Ascending aorta (tissue), 2 donors: ENCODE measurements at regions of chr2 and their contacts with region 1.

Region 1: GRCh38 chr2:127857265-127857808 is 618 bp downstream of the POLR2D start:
- DNase-seq: no peak
- H3K4me3 ChIP-seq: peak overlapping the region; percentile 78 to 96
- H3K27ac ChIP-seq: peak overlapping the region; percentile 67 to 81
- H3K4me1 ChIP-seq: peaks cover 0 to 9% of the 10 kb centered on the region in 2 donors
- H3K27me3 ChIP-seq: no peaks in the 10 kb centered on the region
- CTCF ChIP-seq: no peak

Region 2: GRCh38 chr2:127355386-127356008 is 501.8 kb before region 1 on chr2:
- intact Hi-C with region 1: no loop called
- DNase-seq: no peak
- H3K4me3 ChIP-seq: no peak overlapping the region
- H3K27ac ChIP-seq: no peak overlapping the region
- H3K4me1 ChIP-seq: peaks cover 0 to 11% of the 10 kb centered on the region in 2 donors
- H3K27me3 ChIP-seq: no peaks in the 10 kb centered on the region
- CTCF ChIP-seq: peak; percentile 9 to 41 (median 19)

Region 3: GRCh38 chr2:127743477-127744026 is 113.8 kb before region 1 on chr2:
- intact Hi-C with region 1: no loop called
- DNase-seq: no peak
- H3K4me3 ChIP-seq: no peak overlapping the region
- H3K27ac ChIP-seq: no peak overlapping the region
- H3K4me1 ChIP-seq: no peaks in the 10 kb centered on the region
- H3K27me3 ChIP-seq: no peaks in the 10 kb centered on the region
- CTCF ChIP-seq: no peak

Region 4: DNA sequence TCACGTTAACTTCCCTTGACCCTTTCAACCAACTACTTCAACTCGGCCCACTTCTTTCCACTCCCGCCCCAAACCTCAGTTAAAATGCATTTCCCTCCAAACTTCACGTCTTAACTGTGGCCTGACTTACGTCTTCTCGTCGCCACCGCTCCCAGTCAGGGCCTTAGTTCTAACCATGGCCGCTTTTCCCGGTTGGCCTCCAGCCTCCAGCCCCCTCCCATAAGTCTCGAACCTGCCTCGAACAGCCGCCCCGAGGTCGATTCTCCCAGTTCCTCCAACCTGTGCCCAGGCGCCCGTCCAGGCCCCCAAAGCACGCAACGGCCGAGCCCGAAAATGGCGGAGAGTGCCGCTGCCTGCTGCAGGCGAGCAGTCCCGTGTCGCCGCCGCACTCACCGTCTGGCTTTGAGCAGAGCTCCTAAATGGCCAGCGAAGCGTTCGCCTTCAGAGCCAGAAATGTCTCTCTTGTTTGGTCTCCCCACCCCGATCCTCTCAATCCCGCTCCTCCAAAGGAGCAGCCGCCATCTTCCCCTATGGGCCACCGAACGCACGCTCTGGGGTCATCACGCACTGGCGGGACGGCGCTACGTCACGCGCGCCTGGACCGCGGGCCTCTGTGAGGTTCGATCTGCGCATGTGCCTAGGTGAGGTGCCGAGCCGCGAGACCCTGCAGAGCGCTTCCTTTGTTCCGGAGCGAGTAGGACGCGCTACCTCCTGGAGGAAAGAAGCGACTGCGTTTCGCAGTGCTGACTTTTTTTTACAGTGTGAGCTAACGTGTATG is 46.5 kb before region 1 on chr2 and contains the start of gene WDR33:
- intact Hi-C with region 1: loop called (anchors 2 kb)
- DNase-seq: peak; percentile 57 to 90
- H3K4me3 ChIP-seq: peak within 1 kb of the TSS; percentile 67 to 70
- H3K27ac ChIP-seq: peak within 1 kb of the TSS; percentile 79 to 87
- H3K4me1 ChIP-seq: peaks cover 0 to 26% of the 10 kb centered on the region in 2 donors
- H3K27me3 ChIP-seq: no peaks in the 10 kb centered on the region
- CTCF ChIP-seq: no peak
- total RNA-seq, gene WDR33: 13.9 TPM

Region 5: DNA sequence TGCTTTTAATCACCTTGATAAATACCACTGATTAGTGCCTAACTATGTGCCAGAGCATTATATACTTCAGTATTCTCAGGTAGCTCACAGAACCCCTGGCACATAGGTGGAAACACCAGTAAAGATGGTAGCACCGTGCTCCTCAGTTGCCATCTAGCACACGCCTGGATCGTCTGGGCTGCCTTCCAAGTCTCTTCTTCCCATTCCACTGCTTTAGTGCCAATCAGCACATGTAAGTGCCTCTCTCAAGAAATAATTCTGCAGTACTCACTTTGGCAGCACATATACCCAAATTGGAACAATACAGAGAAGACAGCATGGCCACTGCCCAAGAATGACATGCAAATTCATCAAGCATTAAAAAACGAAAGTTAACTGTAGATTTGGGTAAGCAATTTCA is 12.4 kb before region 1 on chr2:
- intact Hi-C with region 1: no loop called
- DNase-seq: no peak
- H3K4me3 ChIP-seq: no peak overlapping the region
- H3K27ac ChIP-seq: no peak overlapping the region
- H3K4me1 ChIP-seq: no peaks in the 10 kb centered on the region
- H3K27me3 ChIP-seq: no peaks in the 10 kb centered on the region
- CTCF ChIP-seq: no peak